Esophagus muscularis mucosa (tissue), 4 donors: ENCODE measurements at regions of chr5 and their contacts with region 1.

Region 1: DNA sequence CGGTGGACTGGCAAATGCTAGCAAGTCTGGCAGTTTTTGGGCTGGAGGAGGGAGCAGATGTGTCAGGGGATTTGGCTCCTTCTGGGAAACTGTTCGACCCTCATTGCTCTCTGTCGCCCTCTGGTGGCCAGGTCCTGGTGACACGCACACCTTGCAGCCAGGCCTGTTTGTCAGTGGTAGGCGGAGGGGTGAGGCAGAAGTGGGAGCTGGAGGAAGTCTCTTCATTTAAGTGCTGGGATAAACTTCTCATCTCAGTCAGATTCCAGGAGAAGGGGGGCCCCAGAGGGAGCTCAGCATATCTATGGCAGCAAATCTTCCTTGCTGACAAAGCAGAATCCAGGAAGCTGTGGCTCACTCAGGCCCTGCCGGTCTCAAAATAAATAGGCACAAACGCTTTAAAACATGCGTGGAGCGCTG is 326.5 kb downstream of the ZSWIM6 start:
- DNase-seq: no peak
- H3K4me3 ChIP-seq: no peak overlapping the region
- H3K27ac ChIP-seq: no peak overlapping the region
- H3K4me1 ChIP-seq: peaks cover 0 to 9% (median 2%) of the 10 kb centered on the region in 4 donors
- H3K27me3 ChIP-seq: no peaks in the 10 kb centered on the region
- CTCF ChIP-seq: peak; percentile 79 to 94 (median 91)
- EP300 ChIP-seq: no peak
- POLR2A ChIP-seq: no peak

Region 2: GRCh38 chr5:60960591-60960990 is 698.0 kb before region 1 on chr5:
- intact Hi-C with region 1: loop called (anchors 10 kb)
- DNase-seq: no peak
- H3K4me3 ChIP-seq: no peak overlapping the region
- H3K27ac ChIP-seq: no peak overlapping the region
- H3K4me1 ChIP-seq: peaks cover 0 to 5% (median 0%) of the 10 kb centered on the region in 4 donors
- H3K27me3 ChIP-seq: no peaks in the 10 kb centered on the region
- CTCF ChIP-seq: peak in 2 of 3 experiments; percentile 13 to 42
- EP300 ChIP-seq: no peak
- POLR2A ChIP-seq: no peak

Region 3: DNA sequence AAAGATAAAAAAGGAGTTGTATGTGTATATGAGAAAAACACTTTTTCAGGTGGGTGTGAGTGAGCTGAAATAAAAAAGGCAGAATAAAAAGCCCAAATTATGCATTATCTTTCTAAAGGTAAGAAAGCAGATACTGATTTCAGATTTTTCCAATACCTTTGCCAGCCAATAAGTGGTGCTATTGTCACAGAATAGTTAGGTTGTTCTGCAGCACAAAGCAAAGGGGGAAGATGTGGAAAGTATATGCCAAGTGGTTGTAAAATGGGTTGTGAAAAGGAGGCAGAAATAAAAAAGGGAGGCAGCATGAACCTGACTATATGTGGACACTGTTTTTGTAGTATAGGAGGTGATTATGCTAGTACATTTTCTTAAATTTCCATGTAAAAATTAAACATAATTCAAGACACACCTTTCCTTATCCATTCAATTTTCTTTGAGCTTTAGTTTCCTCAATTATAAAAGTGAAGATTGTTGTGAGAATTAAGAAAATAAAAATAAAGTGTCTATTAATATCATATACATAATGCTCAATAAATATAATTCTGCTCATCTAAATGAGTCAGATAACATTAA is 603.1 kb before region 1 on chr5:
- intact Hi-C with region 1: loop called (anchors 10 kb)
- DNase-seq: no peak
- H3K4me3 ChIP-seq: no peak overlapping the region
- H3K27ac ChIP-seq: no peak overlapping the region
- H3K4me1 ChIP-seq: no peaks in the 10 kb centered on the region
- H3K27me3 ChIP-seq: no peaks in the 10 kb centered on the region
- CTCF ChIP-seq: peak; percentile 38 to 51 (median 39)
- EP300 ChIP-seq: no peak
- POLR2A ChIP-seq: no peak

Region 4: DNA sequence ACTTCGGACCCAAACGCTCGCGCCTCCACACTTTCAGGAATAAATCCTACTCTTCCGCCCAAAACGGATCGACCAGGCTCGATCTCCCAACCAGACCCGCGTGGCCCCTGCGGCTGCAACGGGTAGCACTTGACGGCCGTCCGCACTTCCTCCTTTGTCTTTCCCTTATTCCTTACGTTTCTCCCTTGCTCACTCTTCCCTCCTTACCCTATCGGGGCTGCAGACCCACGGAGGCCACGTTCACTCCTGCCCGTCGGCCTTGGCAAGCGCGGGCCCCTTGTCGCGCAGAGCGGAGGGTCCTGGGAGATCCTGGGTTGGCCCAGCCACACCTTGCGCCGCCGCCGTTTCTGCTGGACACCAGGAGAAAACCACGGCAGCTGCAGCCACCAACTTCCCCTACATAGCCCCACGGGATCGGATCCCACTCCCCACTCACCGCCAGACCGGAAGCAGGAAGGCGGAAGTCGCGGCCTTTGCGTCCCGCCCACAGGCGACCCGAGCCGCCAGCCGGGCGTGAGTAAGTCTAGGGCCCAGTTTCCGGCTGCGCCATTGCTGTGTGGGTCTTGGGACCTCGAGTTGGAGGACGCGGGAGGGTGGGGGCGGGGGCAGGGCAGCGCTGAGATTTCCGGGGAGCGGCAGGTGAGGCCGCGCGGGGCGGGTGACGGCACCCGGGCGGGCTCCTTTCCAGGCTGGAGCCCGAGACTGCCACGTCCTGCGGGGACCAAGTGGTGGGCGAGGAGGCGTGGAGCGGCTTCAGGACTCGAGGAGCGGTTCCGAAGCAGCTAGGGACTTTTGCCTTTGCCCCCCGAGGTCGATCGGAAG is 496.4 kb before region 1 on chr5 and contains the start of gene SMIM15:
- intact Hi-C with region 1: loop called (anchors 10 kb)
- DNase-seq: peak; percentile 95
- H3K4me3 ChIP-seq: peak within 1 kb of the TSS; percentile 76 to 92 (median 83)
- H3K27ac ChIP-seq: peak within 1 kb of the TSS; percentile 85 to 92 (median 88)
- H3K4me1 ChIP-seq: peaks cover 11 to 40% (median 30%) of the 10 kb centered on the region in 4 donors
- H3K27me3 ChIP-seq: no peaks in the 10 kb centered on the region
- CTCF ChIP-seq: peak in 1 of 3 experiments; percentile 3
- EP300 ChIP-seq: no peak
- POLR2A ChIP-seq: peak; percentile 14
- total RNA-seq, gene SMIM15: 17.0 to 29.6 (median 26.6) TPM

Region 5: GRCh38 chr5:61277190-61277589 is 381.4 kb before region 1 on chr5:
- intact Hi-C with region 1: loop called (anchors 5 kb)
- DNase-seq: no peak
- H3K4me3 ChIP-seq: no peak overlapping the region
- H3K27ac ChIP-seq: peak overlapping the region; percentile 36 to 63 (median 48)
- H3K4me1 ChIP-seq: peaks cover 10 to 49% (median 43%) of the 10 kb centered on the region in 4 donors
- H3K27me3 ChIP-seq: no peaks in the 10 kb centered on the region
- CTCF ChIP-seq: peak; percentile 32 to 45 (median 36)
- EP300 ChIP-seq: no peak
- POLR2A ChIP-seq: no peak

Region 6: DNA sequence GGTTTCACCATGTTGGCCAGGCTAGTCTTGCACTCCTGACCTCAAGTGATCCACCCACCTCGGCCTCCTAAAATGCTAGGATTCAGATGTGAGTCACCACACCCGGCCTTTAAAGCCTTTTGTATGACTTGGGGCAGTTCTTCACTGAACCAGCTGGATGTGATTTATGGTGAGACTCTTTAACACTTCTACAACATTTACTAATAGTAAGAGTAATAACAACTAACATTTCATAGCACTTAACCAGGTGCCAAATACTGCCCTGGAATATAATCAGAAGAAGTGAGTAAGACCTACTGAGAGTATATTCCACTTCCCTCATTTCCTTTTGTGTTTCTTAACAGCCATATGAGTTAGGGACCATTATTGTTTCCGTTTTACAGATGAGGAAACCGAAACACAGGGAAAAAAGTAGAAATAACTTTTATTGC is 316.5 kb before region 1 on chr5:
- intact Hi-C with region 1: loop called (anchors 5 kb)
- DNase-seq: no peak
- H3K4me3 ChIP-seq: no peak overlapping the region
- H3K27ac ChIP-seq: no peak overlapping the region
- H3K4me1 ChIP-seq: peaks cover 19 to 61% (median 52%) of the 10 kb centered on the region in 4 donors
- H3K27me3 ChIP-seq: no peaks in the 10 kb centered on the region
- CTCF ChIP-seq: no peak
- EP300 ChIP-seq: no peak
- POLR2A ChIP-seq: no peak

Region 7: DNA sequence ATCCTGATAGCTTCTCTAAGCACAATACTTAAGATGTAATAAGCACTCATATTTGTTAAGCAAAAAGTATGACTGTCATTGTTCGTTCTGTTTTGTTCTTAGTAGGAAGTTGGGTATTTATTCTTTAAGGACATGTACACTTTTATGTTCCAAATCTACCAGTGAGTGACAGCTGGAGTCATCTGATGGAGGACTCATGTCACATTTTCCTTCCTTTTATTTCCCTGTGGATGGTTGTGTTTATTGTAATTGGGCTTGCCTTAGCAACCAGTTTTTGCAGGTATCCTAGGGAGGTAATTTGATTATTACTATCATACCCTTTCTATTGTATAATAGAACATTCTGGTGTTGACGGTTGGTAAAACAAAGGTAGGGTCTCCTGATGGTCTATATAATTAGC is 180.8 kb before region 1 on chr5:
- intact Hi-C with region 1: no loop called
- DNase-seq: no peak
- H3K4me3 ChIP-seq: no peak overlapping the region
- H3K27ac ChIP-seq: no peak overlapping the region
- H3K4me1 ChIP-seq: peaks cover 0 to 18% (median 14%) of the 10 kb centered on the region in 4 donors
- H3K27me3 ChIP-seq: no peaks in the 10 kb centered on the region
- CTCF ChIP-seq: no peak
- EP300 ChIP-seq: no peak
- POLR2A ChIP-seq: no peak